Common myeloid progenitor, CD34-positive (primary cell): ENCODE measurements at regions of chr3 and their contacts with region 1.

Region 1: DNA sequence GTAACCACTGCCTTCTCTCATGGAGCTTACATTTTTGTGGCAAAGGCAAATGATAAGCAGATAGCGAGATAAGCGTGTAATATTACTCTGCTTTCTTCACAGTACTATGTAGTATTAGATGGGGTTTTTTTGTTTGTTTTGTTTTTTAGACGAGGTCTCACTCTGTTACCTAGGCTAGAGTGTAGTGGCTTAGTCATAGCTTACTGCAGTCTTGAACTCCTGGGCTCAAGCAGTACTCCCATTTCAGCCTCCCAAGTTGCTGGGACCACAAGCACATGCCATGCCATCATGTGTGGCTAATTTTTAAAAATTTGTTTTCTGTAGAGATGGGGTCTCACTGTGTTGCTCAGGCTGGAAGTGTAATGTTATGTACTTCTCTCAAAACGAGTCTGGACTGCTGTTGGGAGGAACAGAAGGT is 22.9 kb downstream of the MBNL1 start:
- DNase-seq: no peak
- H3K4me3 ChIP-seq: peak overlapping the region in 2 of 7 experiments; percentile 1 to 34
- H3K27ac ChIP-seq: no peak overlapping the region
- H3K4me1 ChIP-seq: peaks cover 39 to 83% (median 56%) of the 10 kb centered on the region in 4 experiments
- H3K27me3 ChIP-seq: no peaks in the 10 kb centered on the region

Region 2: DNA sequence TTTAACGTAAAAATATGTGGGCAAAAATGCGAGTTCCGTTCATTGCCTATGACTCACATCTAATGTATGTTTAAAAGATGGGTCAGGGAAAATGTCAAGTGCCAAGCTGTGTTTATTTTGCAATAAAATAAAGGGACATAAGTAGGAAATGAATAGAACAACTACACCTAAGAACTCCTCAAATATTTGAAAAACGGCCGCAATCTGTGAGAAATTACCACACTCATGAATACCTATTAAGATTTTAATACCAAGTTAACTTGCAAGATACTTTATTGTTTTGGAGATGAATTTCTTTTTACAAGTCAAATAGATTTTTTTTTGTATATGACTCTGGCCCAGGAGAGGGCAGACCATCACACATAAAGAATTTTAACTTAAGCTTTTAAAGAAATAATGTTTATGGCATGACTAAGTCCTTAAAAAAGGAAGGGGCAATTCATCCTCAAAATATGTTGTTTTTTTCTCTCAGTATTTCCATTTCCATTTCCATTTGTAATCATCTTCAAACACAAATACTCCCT is 265.6 kb before region 1 on chr3:
- CTCF ChIA-PET with region 1: no interaction called
- POLR2A ChIA-PET with region 1: no interaction called
- DNase-seq: peak; percentile 23 to 80 (median 80)
- H3K4me3 ChIP-seq: no peak overlapping the region
- H3K27ac ChIP-seq: no peak overlapping the region
- H3K4me1 ChIP-seq: peaks cover 0 to 6% (median under 1%) of the 10 kb centered on the region in 4 experiments
- H3K27me3 ChIP-seq: no peaks in the 10 kb centered on the region

Region 3: GRCh38 chr3:152139651-152140050 is 152.0 kb before region 1 on chr3:
- CTCF ChIA-PET with region 1: no interaction called
- POLR2A ChIA-PET with region 1: no interaction called
- DNase-seq: no peak
- H3K4me3 ChIP-seq: no peak overlapping the region
- H3K27ac ChIP-seq: no peak overlapping the region
- H3K4me1 ChIP-seq: no peaks in the 10 kb centered on the region
- H3K27me3 ChIP-seq: no peaks in the 10 kb centered on the region

Region 4: DNA sequence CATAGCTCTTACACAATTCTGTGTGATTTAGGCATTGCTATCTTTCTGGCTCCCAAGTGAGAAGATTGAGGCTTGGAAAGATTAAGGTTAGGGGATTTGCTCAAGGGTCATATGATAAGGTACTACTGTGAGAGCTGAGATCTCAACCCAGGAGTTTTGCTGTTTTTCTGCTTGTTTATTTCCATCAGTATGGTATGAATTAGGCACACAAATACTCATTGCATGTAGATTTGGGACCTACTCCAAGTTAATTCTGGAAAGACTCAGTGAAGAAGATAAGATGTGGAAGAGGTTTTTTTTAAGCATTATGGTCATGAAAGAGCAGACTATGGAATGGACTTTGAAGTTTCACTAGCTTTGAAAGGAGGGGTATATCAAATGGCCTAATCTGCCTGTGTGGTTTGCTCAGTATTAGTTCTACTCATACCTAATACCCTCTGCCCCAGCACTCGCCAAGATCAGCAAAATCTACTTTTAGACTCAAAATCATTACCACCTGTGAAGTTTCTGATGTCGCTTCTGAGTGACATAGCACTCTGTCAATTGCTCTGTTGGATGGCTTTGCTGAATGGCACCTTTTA is 10.4 kb before region 1 on chr3:
- CTCF ChIA-PET with region 1: interaction called, 14 read pairs
- POLR2A ChIA-PET with region 1: no interaction called
- DNase-seq: no peak
- H3K4me3 ChIP-seq: peak overlapping the region in 1 of 7 experiments; percentile 32
- H3K27ac ChIP-seq: no peak overlapping the region
- H3K4me1 ChIP-seq: peaks cover 46 to 86% (median 67%) of the 10 kb centered on the region in 4 experiments
- H3K27me3 ChIP-seq: no peaks in the 10 kb centered on the region

Region 5: DNA sequence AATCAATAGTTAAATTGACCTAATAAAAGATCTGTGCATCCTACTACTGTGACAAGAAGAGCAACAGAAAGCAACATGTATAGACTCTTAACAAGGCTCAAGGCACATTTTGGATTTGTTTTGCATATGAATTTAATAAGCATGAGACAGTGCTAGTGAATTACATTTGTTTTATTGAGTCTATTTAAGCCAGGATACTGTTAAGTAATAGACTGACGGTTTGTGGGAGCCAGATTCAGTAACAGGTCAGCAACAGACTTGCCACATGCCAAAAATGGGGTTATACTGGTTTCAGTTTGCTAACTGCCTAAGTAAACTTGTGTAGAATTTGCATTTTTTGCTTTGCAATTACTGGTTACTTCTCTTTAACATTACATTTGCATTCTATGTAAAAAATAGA is 31.1 kb after region 1 on chr3:
- CTCF ChIA-PET with region 1: no interaction called
- POLR2A ChIA-PET with region 1: no interaction called
- DNase-seq: peak in 2 of 3 donors; percentile 67 to 72
- H3K4me3 ChIP-seq: peak overlapping the region in 3 of 7 experiments; percentile 13 to 43 (median 42)
- H3K27ac ChIP-seq: peak overlapping the region in 1 of 2 experiments; percentile 63
- H3K4me1 ChIP-seq: peaks cover 28 to 72% (median 37%) of the 10 kb centered on the region in 4 experiments
- H3K27me3 ChIP-seq: no peaks in the 10 kb centered on the region